Ovary (tissue), 10 donors: ENCODE measurements at regions of chr12 and their contacts with region 1.

Region 1: DNA sequence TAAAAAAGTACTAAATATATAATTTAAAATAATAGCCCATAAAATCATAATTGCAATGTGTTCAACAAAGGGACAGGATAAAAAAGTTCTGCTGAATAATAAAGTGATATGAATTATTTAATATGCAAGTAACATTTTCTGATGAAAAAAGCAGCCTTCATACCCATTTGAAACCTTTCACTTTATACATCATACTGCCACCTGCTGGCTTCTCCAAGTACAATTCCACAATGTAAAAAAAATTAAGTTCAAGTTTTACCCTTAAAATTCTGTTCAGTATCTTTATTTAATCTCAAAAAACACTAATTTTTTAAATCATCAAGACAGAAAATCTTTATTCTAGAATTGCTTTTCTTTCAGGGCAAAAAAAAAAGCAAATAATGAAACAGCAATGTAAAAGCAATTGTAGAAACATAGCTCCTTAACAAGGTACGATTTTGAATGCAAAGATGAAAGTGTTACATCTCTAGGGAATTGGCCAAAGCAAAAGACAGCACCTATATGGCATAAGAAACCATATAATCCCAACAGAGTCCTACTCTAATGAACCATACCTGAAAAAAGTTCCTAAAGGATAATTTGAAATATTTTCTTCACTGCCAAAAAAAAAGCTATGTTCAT is 15.0 kb downstream of the MDM1 start:
- DNase-seq: peak in 3 of 5 donors; percentile 16 to 49 (median 37)
- H3K4me3 ChIP-seq: no peak overlapping the region
- H3K27ac ChIP-seq: no peak overlapping the region
- H3K4me1 ChIP-seq: no peaks in the 10 kb centered on the region
- H3K27me3 ChIP-seq: no peaks in the 10 kb centered on the region
- CTCF ChIP-seq: peak; percentile 31 to 64 (median 57)
- EP300 ChIP-seq: no peak
- POLR2A ChIP-seq: no peak

Region 2: DNA sequence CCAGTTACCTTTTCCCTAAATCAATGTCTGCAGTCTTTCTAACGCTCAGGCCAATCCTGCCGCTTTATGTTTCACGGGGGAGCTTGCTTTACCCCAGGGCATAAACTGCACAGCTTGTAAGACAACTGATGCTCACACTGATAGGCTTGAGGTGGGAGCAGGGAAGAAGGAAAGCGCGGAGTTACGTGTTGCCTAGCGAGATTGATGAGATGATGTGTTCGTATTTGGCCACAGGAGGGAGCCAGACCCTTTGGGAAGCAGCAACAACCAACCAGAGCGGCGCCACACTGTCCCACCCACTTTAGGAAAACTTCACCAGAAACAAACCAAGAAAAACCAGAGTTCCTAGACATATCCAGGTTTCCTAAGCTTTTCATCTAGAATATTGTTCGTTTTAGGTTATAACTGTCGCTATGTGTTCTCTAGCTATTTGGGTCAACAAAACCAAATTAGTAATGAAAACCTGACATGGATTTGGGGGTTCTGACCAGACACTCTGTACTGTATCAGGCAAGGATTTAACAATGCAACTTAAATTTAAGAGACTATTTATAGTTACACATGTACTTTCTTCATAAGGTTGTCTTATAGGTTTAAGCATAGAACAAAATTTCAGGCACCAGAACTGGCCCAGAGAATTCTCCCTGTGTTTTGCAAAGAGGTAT is 93.9 kb before region 1 on chr12:
- intact Hi-C with region 1: loop called (anchors 2 to 5 kb)
- DNase-seq: peak; percentile 74 to 86 (median 81)
- H3K4me3 ChIP-seq: no peak overlapping the region
- H3K27ac ChIP-seq: no peak overlapping the region
- H3K4me1 ChIP-seq: no peaks in the 10 kb centered on the region
- H3K27me3 ChIP-seq: no peaks in the 10 kb centered on the region
- CTCF ChIP-seq: peak; percentile 71 to 75 (median 72)
- EP300 ChIP-seq: no peak
- POLR2A ChIP-seq: no peak

Region 3: GRCh38 chr12:68236421-68237059 is 80.6 kb before region 1 on chr12:
- intact Hi-C with region 1: loop called in 1 of 4 experiments (anchors 5 kb)
- DNase-seq: peak in 1 of 5 donors; percentile 22
- H3K4me3 ChIP-seq: peak overlapping the region; percentile 27
- H3K27ac ChIP-seq: peak overlapping the region in 1 of 2 donors; percentile 52
- H3K4me1 ChIP-seq: peaks cover 1% of the 10 kb centered on the region
- H3K27me3 ChIP-seq: no peaks in the 10 kb centered on the region
- CTCF ChIP-seq: no peak
- EP300 ChIP-seq: no peak
- POLR2A ChIP-seq: no peak